Activated CD4-positive, alpha-beta T cell treated with anti-CD3 and anti-CD28 coated beads, Interleukin-2, amount 10 ng/mL, durations not matched to agents 24 days and 14 days (primary cell): ENCODE measurements at regions of chr7 and their contacts with region 1.

Region 1: DNA sequence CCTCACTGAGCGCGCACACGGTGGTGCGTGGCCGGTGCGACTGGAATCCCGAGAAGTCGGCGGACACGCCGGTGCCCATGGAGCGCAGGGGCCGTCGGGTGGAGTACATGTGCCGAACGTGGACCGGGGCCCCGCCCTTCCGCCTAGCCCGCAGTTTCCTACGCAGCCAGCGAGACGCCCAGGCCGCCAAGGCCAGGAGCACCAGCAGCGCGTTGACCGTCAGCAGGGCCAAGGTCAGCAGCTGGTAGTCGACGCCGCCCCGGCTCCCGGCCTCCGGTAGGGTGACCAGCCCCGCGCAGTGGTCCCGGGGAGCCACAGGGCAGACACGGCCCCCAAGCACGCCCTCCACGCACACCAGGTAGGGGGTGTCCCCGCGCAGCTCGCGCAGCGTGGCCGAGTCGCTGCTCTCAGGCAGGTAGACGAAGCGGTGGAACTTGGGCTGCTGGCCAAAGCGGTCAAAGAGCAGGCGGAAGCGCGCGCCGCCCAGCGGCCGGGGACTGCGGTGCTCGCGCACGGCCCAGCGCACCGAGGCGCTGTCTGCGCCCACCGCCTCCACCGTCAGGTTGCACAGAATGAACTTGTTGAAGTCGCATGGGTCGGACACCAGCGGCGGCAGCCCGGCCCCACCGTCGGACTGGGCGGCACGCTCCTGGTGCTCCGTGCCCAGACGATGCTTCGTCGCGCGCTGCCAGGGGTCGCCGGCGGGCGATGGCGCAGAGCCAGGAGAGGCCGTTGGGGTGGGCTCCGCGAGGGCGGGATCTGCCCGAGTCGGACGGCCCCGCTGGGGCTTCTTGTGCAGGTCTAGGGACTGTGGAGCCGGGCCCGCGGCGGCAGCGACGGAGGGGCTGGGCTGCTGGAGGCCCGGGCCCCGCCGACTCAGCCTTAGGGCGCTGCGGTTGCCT is 2.2 kb downstream of the TRIL start:
- DNase-seq: peak; percentile 62
- H3K4me3 Mint-ChIP-seq: no peak overlapping the region
- H3K27ac Mint-ChIP-seq: no peak overlapping the region
- H3K4me1 Mint-ChIP-seq: peaks cover 4% of the 10 kb centered on the region
- H3K27me3 Mint-ChIP-seq: peaks cover 68% of the 10 kb centered on the region

Region 2: DNA sequence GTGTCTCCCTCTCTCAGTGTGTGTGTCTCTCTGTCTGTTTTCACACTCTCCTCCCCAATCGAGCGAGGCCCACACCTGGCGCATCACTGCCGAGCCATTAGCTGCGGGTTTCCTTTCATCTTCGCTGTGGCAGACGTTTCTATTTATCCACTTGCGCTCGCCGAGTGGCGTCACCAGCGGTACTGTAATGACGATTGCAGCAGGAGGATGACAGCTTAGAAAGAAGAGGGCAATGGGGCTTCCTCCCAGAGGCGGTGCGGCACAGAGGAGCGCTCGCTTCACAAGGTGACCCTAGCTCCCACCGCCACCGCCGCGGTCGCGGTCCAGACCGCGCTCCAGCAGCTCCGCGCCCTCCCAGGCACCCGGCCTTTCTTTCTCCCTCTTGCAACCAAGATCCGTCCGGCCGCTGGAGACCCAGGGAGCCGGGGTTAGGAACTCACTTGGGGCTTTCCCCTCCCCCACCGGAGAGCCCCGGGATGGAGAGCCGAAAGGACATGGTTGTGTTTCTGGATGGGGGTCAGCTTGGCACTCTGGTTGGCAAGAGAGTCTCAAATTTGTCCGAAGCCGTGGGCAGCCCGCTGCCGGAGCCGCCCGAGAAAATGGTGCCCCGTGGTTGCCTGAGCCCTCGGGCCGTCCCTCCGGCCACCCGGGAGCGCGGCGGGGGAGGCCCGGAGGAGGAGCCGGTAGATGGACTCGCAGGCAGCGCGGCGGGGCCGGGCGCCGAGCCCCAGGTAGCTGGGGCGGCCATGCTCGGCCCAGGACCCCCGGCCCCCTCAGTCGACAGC is 1713.2 kb before region 1 on chr7 and contains the start of gene EVX1:
- intact Hi-C with region 1: loop called (anchors 5 kb)
- DNase-seq: no peak
- H3K4me3 Mint-ChIP-seq: no peak within 1 kb of the TSS
- H3K27ac Mint-ChIP-seq: peak within 1 kb of the TSS; percentile 16
- H3K4me1 Mint-ChIP-seq: no peaks in the 10 kb centered on the region
- H3K27me3 Mint-ChIP-seq: peaks cover 83% of the 10 kb centered on the region
- total RNA-seq, gene EVX1: not detected in 2 replicates

Region 3: GRCh38 chr7:28408960-28409715 is 546.8 kb before region 1 on chr7:
- intact Hi-C with region 1: loop called (anchors 5 kb)
- DNase-seq: peak; percentile 82
- H3K4me3 Mint-ChIP-seq: peak overlapping the region; percentile 85
- H3K27ac Mint-ChIP-seq: peak overlapping the region; percentile 81
- H3K4me1 Mint-ChIP-seq: peaks cover 25% of the 10 kb centered on the region
- H3K27me3 Mint-ChIP-seq: peaks cover 63% of the 10 kb centered on the region

Region 4: DNA sequence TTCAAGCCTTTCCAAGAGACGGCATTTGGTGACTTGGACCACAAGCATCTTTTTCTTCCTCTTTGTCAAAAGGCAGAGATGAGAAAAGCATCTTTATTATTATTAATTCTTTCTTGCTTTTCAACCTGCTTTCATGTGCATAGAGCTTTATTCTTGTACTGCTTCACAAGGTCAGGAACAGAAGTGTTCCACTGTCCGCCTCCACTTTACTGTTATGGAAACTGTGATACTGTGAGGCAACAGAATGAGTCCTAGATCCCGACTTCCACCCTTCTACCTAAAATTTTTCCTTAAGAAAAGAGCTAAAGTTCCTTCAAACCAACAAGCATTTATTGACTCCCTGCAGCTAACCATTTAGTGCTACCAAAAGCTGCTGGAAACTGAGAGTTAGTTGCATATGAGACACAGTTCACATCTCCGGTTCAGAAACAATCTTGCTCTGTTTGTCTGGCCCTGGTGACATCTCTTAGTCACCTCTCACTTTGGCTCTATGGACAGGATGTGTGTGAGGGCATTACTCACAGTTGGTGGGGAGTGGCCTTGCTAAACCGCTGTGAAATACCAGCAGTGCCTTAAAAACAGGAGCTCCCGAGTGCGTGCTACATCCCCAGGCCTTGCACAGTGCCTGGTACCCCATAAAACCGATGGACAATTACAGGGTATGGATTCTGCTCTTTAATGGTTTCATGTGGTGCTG is 79.2 kb after region 1 on chr7:
- intact Hi-C with region 1: loop called (anchors 5 kb)
- DNase-seq: peak; percentile 66
- H3K4me3 Mint-ChIP-seq: peak overlapping the region; percentile 25
- H3K27ac Mint-ChIP-seq: peak overlapping the region; percentile 78
- H3K4me1 Mint-ChIP-seq: peaks cover 21% of the 10 kb centered on the region
- H3K27me3 Mint-ChIP-seq: no peaks in the 10 kb centered on the region

Region 5: GRCh38 chr7:29045258-29046086 is 89.5 kb after region 1 on chr7:
- intact Hi-C with region 1: no loop called
- DNase-seq: no peak
- H3K4me3 Mint-ChIP-seq: no peak overlapping the region
- H3K27ac Mint-ChIP-seq: no peak overlapping the region
- H3K4me1 Mint-ChIP-seq: no peaks in the 10 kb centered on the region
- H3K27me3 Mint-ChIP-seq: no peaks in the 10 kb centered on the region

Region 6: DNA sequence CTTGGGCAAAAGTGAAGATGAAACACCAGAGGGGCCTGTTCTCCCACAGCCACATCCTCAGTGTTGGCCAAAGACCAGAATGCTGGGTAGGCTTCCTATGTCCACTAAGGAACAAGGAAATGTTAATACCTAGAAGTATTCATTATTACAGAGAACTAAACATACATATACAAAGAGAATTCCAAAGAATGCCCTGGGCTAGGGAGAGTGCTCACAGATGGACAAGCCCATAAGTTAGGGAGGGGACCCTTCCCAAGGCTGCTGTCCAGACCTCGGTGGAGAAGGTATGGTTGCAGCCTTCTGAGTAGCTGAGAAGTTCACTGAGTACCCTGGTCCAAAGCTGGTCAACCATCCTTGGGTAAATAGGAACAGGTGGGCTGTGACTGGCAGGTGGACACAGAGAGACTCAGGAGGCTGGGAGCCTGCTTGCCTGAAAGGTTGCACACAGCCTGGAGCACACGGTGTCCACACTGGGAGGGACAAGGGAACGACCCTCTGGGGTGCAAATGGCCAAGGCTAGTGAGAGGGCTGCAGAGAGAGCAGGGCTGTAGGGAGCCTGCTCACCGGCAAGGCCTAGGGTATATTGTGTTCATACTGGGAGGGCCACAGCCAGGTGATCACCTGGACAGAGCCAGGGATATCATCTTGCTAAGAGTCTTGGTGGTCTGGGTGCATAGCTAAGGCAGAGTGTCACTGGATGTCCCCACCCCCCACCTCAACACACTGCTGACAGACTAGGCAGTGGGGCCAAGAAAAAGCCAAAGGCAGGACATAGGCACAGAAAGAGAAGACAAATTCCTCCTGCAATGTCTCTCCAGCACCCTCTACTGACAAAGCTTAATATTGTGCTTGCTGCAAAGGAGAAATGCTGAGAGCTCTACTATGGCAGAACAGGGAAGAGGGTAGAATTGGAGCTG is 150.0 kb after region 1 on chr7:
- intact Hi-C with region 1: loop called (anchors 1 kb)
- DNase-seq: peak; percentile 74
- H3K4me3 Mint-ChIP-seq: no peak overlapping the region
- H3K27ac Mint-ChIP-seq: no peak overlapping the region
- H3K4me1 Mint-ChIP-seq: peaks cover 3% of the 10 kb centered on the region
- H3K27me3 Mint-ChIP-seq: peaks cover 7% of the 10 kb centered on the region

Region 7: GRCh38 chr7:29189743-29190201 is 233.8 kb after region 1 on chr7:
- intact Hi-C with region 1: loop called (anchors 10 kb)
- DNase-seq: peak; percentile 82
- H3K4me3 Mint-ChIP-seq: no peak overlapping the region
- H3K27ac Mint-ChIP-seq: no peak overlapping the region
- H3K4me1 Mint-ChIP-seq: peaks cover 2% of the 10 kb centered on the region
- H3K27me3 Mint-ChIP-seq: peaks cover 43% of the 10 kb centered on the region

Region 8: DNA sequence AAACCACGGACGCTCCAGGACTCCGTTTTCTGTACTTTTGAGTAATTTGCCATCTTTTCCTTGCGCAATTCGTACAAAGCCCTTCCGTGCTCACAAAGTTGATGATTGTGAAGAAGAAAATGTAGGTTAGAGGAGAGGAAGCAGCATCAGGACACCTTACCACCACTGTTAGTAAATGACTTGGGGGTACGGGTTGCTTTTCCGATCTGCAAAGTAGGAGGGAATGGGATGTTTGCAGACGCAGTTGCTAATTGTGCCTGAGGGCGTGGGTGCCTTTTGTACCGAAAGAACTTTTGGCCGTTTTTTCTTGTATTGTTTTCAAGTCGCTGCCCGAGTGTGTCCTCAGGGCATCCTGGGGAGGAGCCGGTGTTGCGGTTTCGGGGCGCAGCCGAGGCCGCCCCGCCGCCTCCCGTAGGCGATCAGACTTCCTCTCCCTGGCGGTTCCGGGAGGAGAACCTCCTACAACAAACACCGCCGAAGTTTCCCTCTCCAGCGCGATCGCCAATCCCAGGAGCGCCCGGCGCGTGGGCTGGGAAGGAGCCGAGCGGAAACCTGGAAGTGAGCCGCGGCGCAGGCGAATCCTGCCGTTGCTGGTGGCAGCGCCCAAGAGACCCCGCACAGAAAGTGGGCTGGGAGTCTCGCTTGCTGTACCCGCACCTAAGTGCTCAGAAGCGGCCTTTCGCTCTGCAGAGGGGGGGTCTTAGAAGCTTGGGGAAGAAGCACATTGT is 608.7 kb after region 1 on chr7:
- intact Hi-C with region 1: loop called (anchors 5 kb)
- DNase-seq: peak; percentile 64
- H3K4me3 Mint-ChIP-seq: peak overlapping the region; percentile 85
- H3K27ac Mint-ChIP-seq: no peak overlapping the region
- H3K4me1 Mint-ChIP-seq: peaks cover 8% of the 10 kb centered on the region
- H3K27me3 Mint-ChIP-seq: peaks cover 72% of the 10 kb centered on the region